A549 (cell line): ENCODE measurements at regions of chr7 and their contacts with region 1.

Region 1: DNA sequence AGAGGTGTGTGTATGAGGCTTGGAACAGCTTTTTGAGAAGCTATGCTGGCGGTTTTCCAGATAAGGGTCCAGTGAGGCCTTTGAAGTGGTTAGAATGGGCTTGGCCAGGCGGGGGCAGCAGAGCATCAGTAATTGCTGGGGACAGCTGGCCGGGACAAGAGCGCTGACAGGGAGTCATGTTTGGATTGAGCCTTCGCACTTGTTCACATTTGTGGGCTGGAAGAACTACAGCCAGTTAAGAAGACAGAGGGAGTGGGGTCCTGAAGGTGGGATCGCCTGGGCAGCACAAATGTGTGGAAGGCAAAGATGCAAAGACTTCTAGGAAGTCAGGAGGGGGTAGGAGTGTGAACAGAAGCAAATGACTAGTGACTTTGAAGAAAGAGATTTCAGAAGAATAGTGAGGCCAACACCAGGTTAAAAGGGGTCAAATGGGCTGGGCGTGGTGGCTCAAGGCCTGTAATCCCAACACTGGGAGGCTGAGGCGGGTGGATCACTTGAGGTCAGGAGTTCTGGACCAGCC is 12.7 kb upstream of the SDHAF3 start:
- DNase-seq: peak; percentile 47 to 73
- ATAC-seq: peak; percentile 98 to 99
- H3K4me3 ChIP-seq: no peak overlapping the region
- H3K27ac ChIP-seq: no peak overlapping the region
- H3K4me1 ChIP-seq: no peaks in the 10 kb centered on the region
- CTCF ChIP-seq: peak; percentile 85
- EP300 ChIP-seq: no peak
- POLR2A ChIP-seq: no peak
- RAD21 ChIP-seq: peak; percentile 91 to 93

Region 2: GRCh38 chr7:97094284-97094930 is 10.4 kb before region 1 on chr7:
- CTCF ChIA-PET with region 1: interaction called, 14 read pairs
- POLR2A ChIA-PET with region 1: no interaction called
- DNase-seq: no peak
- ATAC-seq: no peak
- H3K4me3 ChIP-seq: no peak overlapping the region
- H3K27ac ChIP-seq: no peak overlapping the region
- H3K4me1 ChIP-seq: no peaks in the 10 kb centered on the region
- CTCF ChIP-seq: no peak
- EP300 ChIP-seq: no peak
- POLR2A ChIP-seq: no peak
- RAD21 ChIP-seq: no peak

Region 3: DNA sequence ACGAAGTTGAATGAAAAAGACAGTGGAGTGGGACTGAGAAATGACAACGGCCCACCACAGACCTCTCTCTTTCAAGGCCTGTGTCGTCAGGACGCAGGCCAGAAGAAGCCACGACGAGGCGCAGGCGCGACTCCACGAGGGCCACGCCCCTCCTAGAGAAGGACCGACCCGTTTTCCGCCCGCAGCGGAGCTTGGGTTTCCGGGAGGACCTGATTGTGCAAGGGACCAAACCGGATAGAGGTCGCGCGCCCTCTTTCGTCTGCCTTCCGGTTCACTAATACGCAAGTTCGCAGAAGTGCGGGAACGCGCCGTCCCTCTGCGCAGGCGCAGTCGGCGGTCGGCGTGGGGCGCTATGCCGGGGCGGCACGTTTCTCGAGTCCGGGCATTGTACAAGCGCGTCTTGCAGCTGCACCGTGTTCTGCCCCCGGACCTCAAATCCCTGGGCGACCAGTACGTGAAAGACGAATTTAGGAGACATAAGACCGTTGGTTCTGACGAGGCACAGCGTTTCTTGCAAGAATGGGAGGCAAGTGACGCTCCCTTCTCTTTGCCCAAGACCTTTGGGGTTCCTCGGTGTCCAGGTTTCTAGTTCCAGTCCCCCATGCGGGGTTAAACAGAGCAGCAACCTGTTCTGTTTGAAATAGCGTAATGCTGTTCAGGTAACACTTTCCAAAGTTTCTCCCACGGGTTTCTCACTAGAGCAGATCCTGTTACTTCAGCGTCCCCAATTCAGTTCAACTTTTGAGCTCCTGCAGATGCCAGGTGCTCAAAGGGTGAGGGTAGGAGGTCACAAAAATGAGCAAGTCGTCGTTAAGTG is 12.8 kb after region 1 on chr7 and contains the start of gene SDHAF3:
- CTCF ChIA-PET with region 1: interaction called, 30 read pairs
- POLR2A ChIA-PET with region 1: interaction called, 13 read pairs
- DNase-seq: peak; percentile 96 to 99
- ATAC-seq: peak; percentile 97 to 98
- H3K4me3 ChIP-seq: peak within 1 kb of the TSS; percentile 83
- H3K27ac ChIP-seq: peak within 1 kb of the TSS; percentile 88 to 90
- H3K4me1 ChIP-seq: peaks cover 9% of the 10 kb centered on the region; the same call in 2 of the 3 replicates
- CTCF ChIP-seq: peak; percentile 25
- EP300 ChIP-seq: no peak
- POLR2A ChIP-seq: peak; percentile 96
- RAD21 ChIP-seq: no peak
- polyA plus RNA-seq, gene SDHAF3: 37.5 and 52.3 TPM in 2 replicates

Region 4: GRCh38 chr7:97179454-97180104 is 74.8 kb after region 1 on chr7:
- CTCF ChIA-PET with region 1: interaction called, 11 read pairs
- POLR2A ChIA-PET with region 1: no interaction called
- DNase-seq: peak; percentile 46 to 66
- ATAC-seq: peak; percentile 78 to 81
- H3K4me3 ChIP-seq: no peak overlapping the region
- H3K27ac ChIP-seq: no peak overlapping the region
- H3K4me1 ChIP-seq: no peaks in the 10 kb centered on the region
- CTCF ChIP-seq: peak; percentile 80
- EP300 ChIP-seq: no peak
- POLR2A ChIP-seq: no peak
- RAD21 ChIP-seq: peak; percentile 56 to 57

Region 5: DNA sequence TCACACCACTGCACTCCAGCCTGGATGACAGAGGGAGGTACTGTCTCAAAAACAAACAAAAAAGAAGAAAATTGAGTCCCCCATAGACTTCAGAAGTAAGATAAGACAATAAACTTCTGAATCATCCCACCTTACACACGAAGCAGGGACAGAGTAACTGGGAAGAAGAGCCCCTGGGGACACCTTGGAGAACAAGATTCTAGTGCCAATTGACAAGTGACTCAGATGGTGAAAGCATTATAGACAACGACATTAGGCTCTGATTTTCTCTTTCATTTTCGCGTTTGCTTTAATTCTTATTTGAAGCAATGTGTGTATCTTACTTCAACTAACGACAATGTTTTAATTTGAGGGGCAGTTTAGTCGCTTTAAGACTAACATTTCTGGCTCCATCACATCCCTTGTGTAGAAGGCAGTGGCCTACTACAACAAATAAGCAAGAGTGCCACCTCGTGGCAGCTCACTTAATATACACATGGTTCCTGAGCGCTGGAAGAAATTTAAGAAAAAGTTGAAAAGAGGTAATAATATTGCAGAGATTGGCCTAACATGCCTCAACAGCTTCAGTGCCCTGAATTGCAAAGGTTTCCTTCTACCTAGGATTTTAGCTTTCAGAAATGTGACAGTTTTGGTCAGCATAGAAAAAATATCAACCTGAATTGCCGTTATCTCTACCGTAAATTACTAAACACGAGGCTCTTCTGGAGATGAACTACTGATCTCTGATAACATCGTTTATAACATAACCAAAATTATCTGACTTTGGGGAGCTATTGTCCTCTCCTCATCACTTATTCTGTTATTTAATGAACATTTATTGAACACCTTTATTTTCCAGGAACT is 730.7 kb after region 1 on chr7:
- CTCF ChIA-PET with region 1: interaction called, 29 read pairs
- POLR2A ChIA-PET with region 1: no interaction called
- DNase-seq: peak; percentile 21 to 67
- ATAC-seq: peak; percentile 78 to 96; a peak in 5 of 6 replicates
- H3K4me3 ChIP-seq: no peak overlapping the region
- H3K27ac ChIP-seq: no peak overlapping the region
- H3K4me1 ChIP-seq: no peaks in the 10 kb centered on the region
- CTCF ChIP-seq: peak; percentile 86
- EP300 ChIP-seq: no peak
- POLR2A ChIP-seq: no peak
- RAD21 ChIP-seq: peak; percentile 80 to 81

Region 6: GRCh38 chr7:97845622-97846203 is 740.9 kb after region 1 on chr7:
- CTCF ChIA-PET with region 1: interaction called, 19 read pairs
- POLR2A ChIA-PET with region 1: no interaction called
- DNase-seq: peak; percentile 16 to 24
- ATAC-seq: peak in 1 of 2 experiments; percentile 64; a peak in 3 of 6 replicates
- H3K4me3 ChIP-seq: no peak overlapping the region
- H3K27ac ChIP-seq: no peak overlapping the region
- H3K4me1 ChIP-seq: no peaks in the 10 kb centered on the region
- CTCF ChIP-seq: peak; percentile 74
- EP300 ChIP-seq: no peak
- POLR2A ChIP-seq: no peak
- RAD21 ChIP-seq: peak; percentile 60 to 69